ENCODE measurements at regions of chr5 and their contacts with region 1.

Region 1: DNA sequence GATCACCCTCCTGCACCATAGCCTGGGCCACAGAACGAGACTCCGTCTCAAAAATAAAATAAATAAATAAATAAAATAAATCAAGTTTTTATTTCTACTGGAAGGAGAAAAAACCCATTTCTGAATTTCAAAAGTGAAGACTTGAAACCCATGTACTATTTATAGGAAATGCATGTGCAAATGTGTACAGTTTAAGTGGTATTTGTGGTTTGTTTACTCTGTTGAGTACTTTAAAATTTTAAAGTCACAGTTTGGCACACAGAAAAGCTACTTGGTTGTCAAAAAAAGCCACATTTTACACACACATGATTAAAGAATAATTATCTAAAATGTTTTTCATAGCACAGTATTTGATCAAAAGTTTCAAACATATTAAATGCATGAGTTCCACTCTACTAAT is 43.6 kb downstream of the NR3C1 start:
- DNase-seq: no peak
- CTCF ChIP-seq: no peak

Region 2: DNA sequence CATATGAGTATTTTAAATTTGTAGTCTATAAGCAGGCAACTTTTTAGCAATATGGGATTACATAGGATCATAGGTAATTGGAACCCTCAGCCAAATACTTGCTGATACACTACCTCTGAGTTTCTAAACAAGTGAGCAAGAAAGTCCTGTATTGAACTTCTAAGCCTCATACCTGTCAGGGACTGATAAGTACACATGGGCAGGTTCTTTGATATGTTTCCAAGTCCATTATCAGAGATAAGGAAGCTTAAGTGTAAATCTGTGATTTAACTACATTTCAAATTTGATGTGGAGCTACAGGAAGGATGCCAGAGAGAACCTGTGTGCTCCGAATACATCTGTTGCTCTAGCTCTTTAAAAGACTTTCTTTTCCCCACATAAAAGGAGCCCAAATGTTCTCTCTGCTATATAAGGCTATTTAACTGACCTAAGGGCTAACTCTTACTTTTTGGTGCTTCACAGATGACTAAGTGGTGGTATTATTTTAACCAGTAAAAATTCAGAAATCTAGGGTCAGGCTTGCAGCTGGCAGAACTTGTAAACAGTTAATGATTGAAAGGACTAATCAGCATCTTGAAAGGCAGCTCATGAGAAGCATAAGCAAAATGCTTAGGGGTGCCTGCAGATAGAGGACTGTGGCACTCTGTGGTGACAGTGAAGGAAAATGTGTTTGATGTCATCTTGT is 185.0 kb before region 1 on chr5:
- CTCF ChIA-PET with region 1: no interaction called
- POLR2A ChIA-PET with region 1: no interaction called
- DNase-seq: peak; percentile 54
- CTCF ChIP-seq: no peak

Region 3: DNA sequence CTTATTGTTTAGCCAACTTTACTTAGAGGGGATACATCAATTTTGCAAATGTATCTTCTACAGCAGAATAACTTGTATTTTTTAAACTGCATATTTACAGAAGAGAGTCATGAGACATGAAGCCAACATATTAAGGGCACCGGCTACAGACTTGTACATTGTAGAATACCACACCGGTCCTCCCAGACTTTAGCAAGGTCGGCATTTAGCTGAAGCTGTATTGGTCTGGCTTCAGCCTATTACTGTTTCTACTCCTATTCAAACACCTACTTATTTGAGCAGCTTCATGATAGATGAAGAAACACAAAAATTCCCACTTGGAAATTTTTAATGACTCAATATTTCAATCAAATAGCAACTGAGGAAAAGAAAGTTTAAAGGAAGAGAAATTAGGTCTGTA is 10.6 kb after region 1 on chr5:
- CTCF ChIA-PET with region 1: interaction called, 16 read pairs
- POLR2A ChIA-PET with region 1: no interaction called
- DNase-seq: no peak
- CTCF ChIP-seq: no peak

Measured in GM10248 (cell line).